ENCODE measurements at regions of chr6 and their contacts with region 1.

Region 1: GRCh38 chr6:101114703-101115102 is 233.6 kb upstream of the ASCC3 start:
- DNase-seq: no peak
- H3K4me3 ChIP-seq: no peak overlapping the region
- H3K27ac ChIP-seq: no peak overlapping the region
- H3K4me1 ChIP-seq: peaks cover 0 to 3% (median 3%) of the 10 kb centered on the region in 4 experiments; a peak in 3 of 7 replicates
- H3K27me3 ChIP-seq: no peaks in the 10 kb centered on the region
- CTCF ChIP-seq: peak in 2 of 3 experiments; percentile 42 to 60; a peak in 2 of 4 replicates
- EP300 ChIP-seq: no peak
- POLR2A ChIP-seq: no peak
- RAD21 ChIP-seq: peak; percentile 73 to 75

Region 2: DNA sequence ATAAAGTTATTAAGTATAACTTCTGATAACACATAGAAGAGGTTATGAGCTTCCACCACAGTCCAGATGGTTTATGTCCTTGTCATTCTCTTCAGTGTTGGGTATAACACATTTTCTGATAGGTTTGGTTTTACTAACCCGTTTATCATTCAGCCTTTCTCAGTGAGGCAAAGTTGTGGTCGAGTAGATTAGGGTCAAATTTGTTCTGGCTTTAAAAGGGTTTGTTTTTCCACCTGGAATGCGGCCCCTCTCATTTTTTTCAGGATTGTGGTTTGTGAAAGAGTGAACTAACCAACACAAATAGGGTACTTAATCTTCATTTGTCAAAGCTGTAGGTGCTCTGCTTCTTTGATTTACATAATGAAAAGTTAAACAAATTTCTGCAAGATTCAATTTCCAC is 29.4 kb before region 1 on chr6:
- CTCF ChIA-PET with region 1: interaction called, 10 read pairs
- POLR2A ChIA-PET with region 1: no interaction called
- DNase-seq: no peak
- H3K4me3 ChIP-seq: peak overlapping the region in 1 of 4 experiments; percentile 1; a peak in 1 of 8 replicates
- H3K27ac ChIP-seq: no peak overlapping the region
- H3K4me1 ChIP-seq: peaks cover 0 to 10% (median 2%) of the 10 kb centered on the region in 4 experiments; a peak in 3 of 7 replicates
- H3K27me3 ChIP-seq: no peaks in the 10 kb centered on the region
- CTCF ChIP-seq: no peak
- EP300 ChIP-seq: no peak
- POLR2A ChIP-seq: no peak
- RAD21 ChIP-seq: no peak

Region 3: GRCh38 chr6:101226626-101227165 is 112.0 kb after region 1 on chr6:
- CTCF ChIA-PET with region 1: interaction called, 49 read pairs
- POLR2A ChIA-PET with region 1: no interaction called
- DNase-seq: peak; percentile 85 to 86
- H3K4me3 ChIP-seq: no peak overlapping the region
- H3K27ac ChIP-seq: no peak overlapping the region
- H3K4me1 ChIP-seq: peaks cover 0 to 8% (median 3%) of the 10 kb centered on the region in 4 experiments; a peak in 4 of 7 replicates
- H3K27me3 ChIP-seq: no peaks in the 10 kb centered on the region
- CTCF ChIP-seq: peak; percentile 71 to 82 (median 80)
- EP300 ChIP-seq: no peak
- POLR2A ChIP-seq: no peak
- RAD21 ChIP-seq: peak; percentile 89 to 93

Region 4: DNA sequence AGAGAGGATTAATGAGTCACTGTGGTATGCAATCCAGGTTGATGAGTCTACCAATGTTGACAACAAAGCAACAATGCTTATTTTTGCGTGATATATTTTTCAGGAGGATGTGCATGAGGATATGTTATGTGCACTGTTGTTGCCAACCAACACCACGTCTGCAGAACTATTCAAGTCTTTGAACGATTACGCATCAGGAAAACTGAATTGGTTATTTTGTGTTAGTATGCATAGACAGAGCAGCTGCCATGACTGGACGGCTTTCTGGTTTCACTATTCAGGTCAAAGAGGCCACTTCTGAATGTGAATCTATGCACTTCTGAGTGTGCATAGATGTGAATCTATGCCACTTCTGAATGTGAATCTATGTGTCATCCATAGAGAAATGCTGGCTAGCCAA is 144.8 kb after region 1 on chr6:
- CTCF ChIA-PET with region 1: no interaction called
- POLR2A ChIA-PET with region 1: no interaction called
- DNase-seq: no peak
- H3K4me3 ChIP-seq: no peak overlapping the region
- H3K27ac ChIP-seq: no peak overlapping the region
- H3K4me1 ChIP-seq: no peaks in the 10 kb centered on the region
- H3K27me3 ChIP-seq: no peaks in the 10 kb centered on the region
- CTCF ChIP-seq: no peak
- EP300 ChIP-seq: no peak
- POLR2A ChIP-seq: no peak
- RAD21 ChIP-seq: no peak

Measured in H1 (cell line).